MCF 10A (cell line): ENCODE measurements at regions of chr2 and their contacts with region 1.

Region 1: GRCh38 chr2:131673392-131674173 is 145.9 kb downstream of the CCDC74A start:
- DNase-seq: peak; percentile 77
- H3K4me3 Mint-ChIP-seq: peak overlapping the region; percentile 52
- H3K27ac Mint-ChIP-seq: no peak overlapping the region
- H3K4me1 Mint-ChIP-seq: peaks cover 9% of the 10 kb centered on the region
- H3K27me3 Mint-ChIP-seq: peaks cover 19% of the 10 kb centered on the region
- CTCF ChIP-seq: peak; percentile 77

Region 2: GRCh38 chr2:131154071-131154531 is 519.5 kb before region 1 on chr2:
- CTCF ChIA-PET with region 1: interaction called, 41 read pairs
- POLR2A ChIA-PET with region 1: interaction called, 5 read pairs
- intact Hi-C with region 1: no loop called
- DNase-seq: peak; percentile 67
- H3K4me3 Mint-ChIP-seq: no peak overlapping the region
- H3K27ac Mint-ChIP-seq: no peak overlapping the region
- H3K4me1 Mint-ChIP-seq: no peaks in the 10 kb centered on the region
- H3K27me3 Mint-ChIP-seq: peaks cover 18% of the 10 kb centered on the region
- CTCF ChIP-seq: peak; percentile 91

Region 3: GRCh38 chr2:131408207-131408606 is 265.4 kb before region 1 on chr2:
- CTCF ChIA-PET with region 1: interaction called, 76 read pairs
- POLR2A ChIA-PET with region 1: no interaction called
- intact Hi-C with region 1: loop called (anchors 1 kb)
- DNase-seq: no peak
- H3K4me3 Mint-ChIP-seq: no peak overlapping the region
- H3K27ac Mint-ChIP-seq: no peak overlapping the region
- H3K4me1 Mint-ChIP-seq: peaks cover 4% of the 10 kb centered on the region
- H3K27me3 Mint-ChIP-seq: peaks cover 97% of the 10 kb centered on the region
- CTCF ChIP-seq: no peak

Region 4: DNA sequence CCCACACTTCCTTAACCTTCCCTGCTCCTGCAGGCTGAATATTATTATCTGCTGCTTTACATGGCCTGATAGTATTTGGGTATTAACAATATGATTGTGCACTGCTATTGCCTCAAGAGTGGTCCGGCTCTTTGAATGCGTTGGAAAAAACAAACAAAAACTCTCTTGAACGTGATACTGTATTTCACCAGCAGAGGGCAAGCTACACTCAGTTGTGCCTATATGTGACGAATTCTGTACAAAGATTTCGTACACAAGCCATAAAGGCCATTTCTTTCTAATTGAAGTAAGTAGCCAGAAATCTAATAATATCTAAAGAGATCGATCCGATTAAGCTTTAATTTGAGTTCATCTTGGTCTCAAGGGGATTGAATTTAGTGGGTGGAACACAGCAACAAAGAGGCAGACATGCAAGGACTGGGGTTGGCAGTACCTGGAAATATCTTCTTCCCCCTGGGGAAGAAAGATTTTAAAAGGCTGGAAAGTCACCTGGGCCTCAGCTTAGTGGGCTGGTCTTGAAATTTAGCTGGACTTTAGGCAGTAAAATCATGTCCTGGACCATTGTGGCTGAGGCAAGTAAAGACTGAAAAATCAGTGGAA is 260.3 kb before region 1 on chr2:
- CTCF ChIA-PET with region 1: interaction called, 76 read pairs
- POLR2A ChIA-PET with region 1: no interaction called
- intact Hi-C with region 1: loop called (anchors 1 kb)
- DNase-seq: peak; percentile 66
- H3K4me3 Mint-ChIP-seq: no peak overlapping the region
- H3K27ac Mint-ChIP-seq: no peak overlapping the region
- H3K4me1 Mint-ChIP-seq: peaks cover 6% of the 10 kb centered on the region
- H3K27me3 Mint-ChIP-seq: peaks cover 81% of the 10 kb centered on the region
- CTCF ChIP-seq: peak; percentile 82

Region 5: DNA sequence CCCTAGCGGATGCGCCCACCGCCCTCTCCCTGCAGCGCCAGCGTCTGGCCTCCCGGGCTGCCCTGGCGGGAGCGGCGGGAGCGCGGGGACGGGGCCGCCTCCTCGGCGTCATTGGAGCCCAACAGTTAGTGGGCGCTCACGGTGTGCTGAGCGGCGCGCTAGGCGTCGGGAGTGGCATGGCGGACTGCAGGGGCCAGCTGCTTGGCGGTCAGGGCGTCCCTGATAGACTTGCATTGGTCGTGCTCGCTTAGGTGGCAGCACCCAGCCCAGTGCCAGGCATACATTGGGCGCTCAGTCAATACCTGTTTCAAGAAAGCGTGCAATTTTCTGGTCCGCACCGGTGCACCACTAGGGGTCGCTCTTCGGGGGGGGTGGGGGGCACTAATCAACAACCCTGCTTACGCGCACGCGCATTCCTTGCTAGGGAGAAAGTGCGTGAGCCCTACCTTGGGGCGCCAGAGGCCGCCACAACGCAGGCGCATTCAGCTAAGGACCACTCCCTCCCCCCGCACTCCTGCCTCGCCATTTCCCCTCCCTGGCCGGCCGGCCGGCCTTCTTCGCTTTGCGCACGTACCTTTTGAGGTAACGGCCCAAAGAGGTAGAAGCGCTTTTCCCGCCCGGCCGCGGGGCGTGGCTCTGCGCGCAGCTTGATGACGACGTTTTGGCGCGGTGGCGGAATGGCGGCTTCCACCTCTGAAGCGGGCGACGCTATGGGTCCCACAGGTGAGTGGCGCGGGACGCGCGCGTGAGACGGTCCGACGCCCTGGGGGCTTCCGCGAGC is 181.0 kb before region 1 on chr2:
- CTCF ChIA-PET with region 1: interaction called, 22 read pairs
- POLR2A ChIA-PET with region 1: interaction called, 3 read pairs
- intact Hi-C with region 1: loop called (anchors 10 kb)
- DNase-seq: peak; percentile 96
- H3K4me3 Mint-ChIP-seq: peak overlapping the region; percentile 92
- H3K27ac Mint-ChIP-seq: peak overlapping the region; percentile 94
- H3K4me1 Mint-ChIP-seq: peaks cover 12% of the 10 kb centered on the region
- H3K27me3 Mint-ChIP-seq: no peaks in the 10 kb centered on the region
- CTCF ChIP-seq: peak; percentile 67

Region 6: GRCh38 chr2:131801210-131801744 is 127.7 kb after region 1 on chr2:
- CTCF ChIA-PET with region 1: interaction called, 50 read pairs
- POLR2A ChIA-PET with region 1: no interaction called
- intact Hi-C with region 1: loop called (anchors 1 kb)
- DNase-seq: no peak
- H3K4me3 Mint-ChIP-seq: no peak overlapping the region
- H3K27ac Mint-ChIP-seq: no peak overlapping the region
- H3K4me1 Mint-ChIP-seq: no peaks in the 10 kb centered on the region
- H3K27me3 Mint-ChIP-seq: peaks cover 9% of the 10 kb centered on the region
- CTCF ChIP-seq: no peak